ENCODE measurements at regions of chr12 and their contacts with region 1.

Region 1: GRCh38 chr12:13179211-13180074 is 17.1 kb upstream of the EMP1 start:
- DNase-seq: peak; percentile 74
- ATAC-seq: peak; percentile 90
- H3K4me3 ChIP-seq: peak overlapping the region; percentile 60
- H3K27ac ChIP-seq: peak overlapping the region; percentile 86
- H3K4me1 ChIP-seq: peaks cover 56% of the 10 kb centered on the region
- H3K27me3 ChIP-seq: no peaks in the 10 kb centered on the region
- CTCF ChIP-seq: no peak

Region 2: GRCh38 chr12:12684375-12685106 is 494.9 kb before region 1 on chr12:
- CTCF ChIA-PET with region 1: no interaction called
- POLR2A ChIA-PET with region 1: no interaction called
- intact Hi-C with region 1: no loop called
- DNase-seq: peak; percentile 22
- ATAC-seq: no peak
- H3K4me3 ChIP-seq: no peak overlapping the region
- H3K27ac ChIP-seq: no peak overlapping the region
- H3K4me1 ChIP-seq: no peaks in the 10 kb centered on the region
- H3K27me3 ChIP-seq: no peaks in the 10 kb centered on the region
- CTCF ChIP-seq: no peak

Region 3: DNA sequence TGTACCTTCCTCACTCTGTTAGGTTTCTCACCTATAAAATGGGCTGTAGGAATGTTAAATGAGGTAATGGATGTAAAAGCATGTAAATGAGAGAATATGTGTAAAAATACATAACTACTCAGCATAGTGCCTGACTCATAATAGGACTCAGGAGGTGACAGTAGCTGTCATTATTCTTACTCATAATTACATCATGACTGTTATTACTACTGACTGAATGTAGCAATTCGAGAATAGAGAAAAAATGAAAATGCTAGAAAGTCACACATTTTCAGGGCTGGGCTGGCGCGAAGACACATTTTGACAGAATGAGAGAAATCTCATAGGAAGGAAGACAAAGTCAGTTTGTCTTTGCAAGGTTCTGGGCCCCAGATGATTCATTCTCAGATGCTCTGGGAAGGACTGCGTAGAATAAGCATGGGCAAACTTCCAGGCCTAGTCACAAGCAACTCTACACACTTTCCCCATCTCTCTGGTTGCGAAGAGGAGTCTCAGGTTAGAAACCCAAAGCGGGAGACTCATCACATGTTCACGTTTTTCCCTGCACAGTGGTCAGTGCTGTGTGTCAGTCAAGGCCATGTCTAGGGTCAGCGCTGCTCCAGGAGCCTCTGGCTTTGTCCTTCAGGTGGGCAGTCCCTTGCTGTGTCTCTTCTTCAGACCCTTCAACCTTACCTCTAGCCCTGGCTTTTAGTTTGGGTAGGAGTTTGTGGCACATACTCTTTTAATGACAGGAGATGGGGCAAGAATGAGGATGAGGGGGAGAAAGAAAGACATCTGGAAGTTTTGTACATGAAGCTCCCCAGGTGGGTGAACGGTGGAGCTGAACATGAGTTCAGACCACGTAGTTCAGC is 279.7 kb before region 1 on chr12:
- CTCF ChIA-PET with region 1: interaction called, 8 read pairs
- POLR2A ChIA-PET with region 1: interaction called, 19 read pairs
- intact Hi-C with region 1: no loop called
- DNase-seq: peak; percentile 82
- ATAC-seq: peak; percentile 38
- H3K4me3 ChIP-seq: peak overlapping the region; percentile 32
- H3K27ac ChIP-seq: peak overlapping the region; percentile 83
- H3K4me1 ChIP-seq: peaks cover 84% of the 10 kb centered on the region
- H3K27me3 ChIP-seq: no peaks in the 10 kb centered on the region
- CTCF ChIP-seq: no peak

Region 4: DNA sequence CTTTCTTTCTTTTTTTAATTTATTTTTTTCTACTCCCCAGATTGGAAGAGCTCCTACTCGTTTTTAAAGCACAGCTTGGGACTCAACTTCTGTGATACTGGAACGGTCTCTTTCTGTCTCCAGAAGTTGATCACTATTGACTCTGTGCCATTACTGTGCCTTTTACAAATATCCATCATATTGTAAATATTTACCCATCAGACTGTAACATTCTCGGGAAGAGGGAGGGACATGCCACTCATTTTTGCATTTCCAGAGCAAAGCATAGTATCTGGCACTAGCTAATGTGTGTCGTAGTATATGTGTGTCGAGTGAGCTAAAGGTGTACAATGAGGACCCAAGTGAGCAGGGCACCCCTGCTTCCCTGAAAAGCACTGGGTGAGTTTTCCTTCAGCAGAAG is 52.0 kb before region 1 on chr12:
- CTCF ChIA-PET with region 1: no interaction called
- POLR2A ChIA-PET with region 1: interaction called, 14 read pairs
- intact Hi-C with region 1: no loop called
- DNase-seq: peak; percentile 86
- ATAC-seq: peak; percentile 89
- H3K4me3 ChIP-seq: no peak overlapping the region
- H3K27ac ChIP-seq: peak overlapping the region; percentile 65
- H3K4me1 ChIP-seq: peaks cover 55% of the 10 kb centered on the region
- H3K27me3 ChIP-seq: no peaks in the 10 kb centered on the region
- CTCF ChIP-seq: no peak

Region 5: DNA sequence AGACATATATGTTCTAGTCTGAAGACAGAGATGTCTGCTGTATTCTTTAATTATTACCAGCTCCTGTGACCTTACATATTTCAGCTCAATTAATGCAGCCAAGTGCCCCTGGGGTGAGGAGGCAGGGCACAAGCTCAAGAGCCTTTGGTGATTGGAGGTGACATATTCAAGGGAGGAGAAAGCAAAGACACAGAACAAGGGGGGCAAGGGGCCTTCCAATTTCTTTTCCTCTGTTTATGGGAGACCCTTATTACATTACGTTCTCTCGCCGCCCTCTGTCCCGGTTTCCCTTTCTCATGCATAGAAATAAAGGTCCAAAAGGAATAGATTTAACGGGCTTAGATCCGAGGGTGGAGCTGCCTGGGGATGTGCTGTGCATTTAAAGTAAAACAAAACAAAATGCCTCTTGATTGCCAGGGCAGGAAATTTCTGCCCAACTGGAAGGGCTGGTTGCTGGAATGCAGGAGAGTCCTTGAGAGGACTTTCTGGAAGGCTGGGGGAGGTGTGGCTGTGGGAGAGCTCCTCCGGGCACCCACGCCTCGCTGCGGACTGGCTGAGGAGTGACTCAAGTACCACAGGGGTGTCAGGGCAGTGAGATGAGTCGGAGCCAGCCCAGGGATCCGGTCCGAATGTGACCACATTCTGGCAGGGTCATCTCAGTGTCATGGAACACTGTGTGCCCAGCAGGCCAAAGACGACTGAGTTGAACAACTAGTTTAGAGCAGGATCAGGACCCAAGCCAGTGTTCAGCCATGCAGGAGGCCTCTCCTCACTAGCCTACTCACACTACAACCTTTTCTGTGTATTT is 43.9 kb before region 1 on chr12:
- CTCF ChIA-PET with region 1: interaction called, 3 read pairs
- POLR2A ChIA-PET with region 1: interaction called, 3 read pairs
- intact Hi-C with region 1: loop called (anchors 5 kb)
- DNase-seq: peak; percentile 97
- ATAC-seq: peak; percentile 94
- H3K4me3 ChIP-seq: peak overlapping the region; percentile 62
- H3K27ac ChIP-seq: peak overlapping the region; percentile 89
- H3K4me1 ChIP-seq: peaks cover 40% of the 10 kb centered on the region
- H3K27me3 ChIP-seq: no peaks in the 10 kb centered on the region
- CTCF ChIP-seq: peak; percentile 31; the same call in 1 of the 2 replicates